K562 (cell line): ENCODE measurements at regions of chr11 and their contacts with region 1.

Region 1: GRCh38 chr11:125164422-125165110 is at the start of gene PKNOX2:
- DNase-seq: peak; percentile 48 to 71 (median 67)
- ATAC-seq: peak; percentile 96
- H3K4me3 ChIP-seq: no peak within 1 kb of the TSS
- H3K27ac ChIP-seq: no peak within 1 kb of the TSS
- H3K4me1 ChIP-seq: peaks cover 0 to 11% of the 10 kb centered on the region in 2 experiments; a peak in 2 of 5 replicates
- H3K27me3 ChIP-seq: peaks cover 32 to 42% of the 10 kb centered on the region in 2 experiments; a peak in 4 of 5 replicates
- CTCF ChIP-seq: peak in 2 of 3 experiments; percentile 44 to 70; a peak in 4 of 6 replicates
- EP300 ChIP-seq: no peak
- POLR2A ChIP-seq: no peak
- RAD21 ChIP-seq: no peak
- polyA plus RNA-seq, gene PKNOX2: not detected

Region 2: DNA sequence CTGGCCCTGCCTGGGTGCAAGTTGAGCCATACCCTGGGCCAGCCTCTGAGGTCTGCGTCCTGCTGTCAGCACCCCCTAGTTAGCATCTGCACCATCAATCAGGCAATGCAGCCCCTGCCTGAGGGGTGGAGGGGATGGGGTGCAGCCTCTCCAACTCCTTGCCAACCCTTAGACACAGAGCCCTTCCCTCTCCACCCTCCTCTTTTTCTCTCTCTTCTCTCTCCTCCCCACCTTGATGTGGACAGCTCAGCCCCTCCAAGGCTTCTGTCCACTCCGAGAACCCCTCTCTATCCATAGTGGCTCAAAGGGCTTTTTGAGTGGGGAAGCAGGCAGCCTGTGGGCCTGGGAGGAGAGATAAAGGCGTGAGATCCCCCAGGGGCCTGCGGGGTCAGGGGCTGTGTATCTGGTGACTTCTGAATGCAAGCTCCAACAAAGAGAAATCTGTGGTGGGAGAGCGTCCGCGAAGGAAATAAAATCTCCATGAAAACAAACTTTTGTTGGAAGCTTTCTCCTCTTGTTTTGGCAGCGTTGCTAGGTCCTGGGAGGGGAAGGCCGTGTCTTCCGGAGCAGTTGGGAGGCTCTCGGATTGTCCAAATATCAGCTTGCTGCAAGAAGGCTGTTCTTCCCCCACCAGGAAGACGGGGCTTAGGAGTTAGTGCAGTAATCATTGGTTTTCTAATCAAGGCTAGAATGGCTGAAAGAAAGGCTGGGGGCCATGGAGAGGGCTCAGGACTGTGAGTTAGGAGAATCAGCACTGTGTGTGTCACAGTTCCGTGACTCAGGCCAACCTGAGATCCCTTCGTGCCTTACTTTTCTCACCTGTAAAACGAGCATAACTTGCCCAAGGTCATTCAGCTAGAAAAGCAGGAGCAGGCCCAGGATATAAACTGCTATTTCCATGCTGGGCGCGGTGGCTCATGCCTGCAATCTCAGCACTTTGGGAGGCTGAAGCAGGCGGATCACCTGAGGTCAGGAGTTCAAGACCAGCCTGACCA is 50.3 kb after region 1 on chr11:
- CTCF ChIA-PET with region 1: no interaction called
- POLR2A ChIA-PET with region 1: no interaction called
- in situ Hi-C with region 1: loop called (anchors 5 kb)
- intact Hi-C with region 1: no loop called
- DNase-seq: no peak
- ATAC-seq: no peak
- H3K4me3 ChIP-seq: no peak overlapping the region
- H3K27ac ChIP-seq: no peak overlapping the region
- H3K4me1 ChIP-seq: no peaks in the 10 kb centered on the region
- H3K27me3 ChIP-seq: peaks cover 29 to 69% of the 10 kb centered on the region in 2 experiments
- CTCF ChIP-seq: no peak
- EP300 ChIP-seq: no peak
- POLR2A ChIP-seq: no peak
- RAD21 ChIP-seq: no peak

Region 3: GRCh38 chr11:125519860-125520834 is 355.6 kb after region 1 on chr11:
- CTCF ChIA-PET with region 1: no interaction called
- POLR2A ChIA-PET with region 1: no interaction called
- in situ Hi-C with region 1: no loop called
- intact Hi-C with region 1: no loop called
- DNase-seq: no peak
- ATAC-seq: no peak
- H3K4me3 ChIP-seq: no peak overlapping the region
- H3K27ac ChIP-seq: no peak overlapping the region
- H3K4me1 ChIP-seq: peaks cover 0 to 16% of the 10 kb centered on the region in 2 experiments; a peak in 4 of 5 replicates
- H3K27me3 ChIP-seq: no peaks in the 10 kb centered on the region
- CTCF ChIP-seq: no peak
- EP300 ChIP-seq: no peak
- POLR2A ChIP-seq: no peak
- RAD21 ChIP-seq: no peak